ENCODE measurements at regions of chr17 and their contacts with region 1.

Region 1: DNA sequence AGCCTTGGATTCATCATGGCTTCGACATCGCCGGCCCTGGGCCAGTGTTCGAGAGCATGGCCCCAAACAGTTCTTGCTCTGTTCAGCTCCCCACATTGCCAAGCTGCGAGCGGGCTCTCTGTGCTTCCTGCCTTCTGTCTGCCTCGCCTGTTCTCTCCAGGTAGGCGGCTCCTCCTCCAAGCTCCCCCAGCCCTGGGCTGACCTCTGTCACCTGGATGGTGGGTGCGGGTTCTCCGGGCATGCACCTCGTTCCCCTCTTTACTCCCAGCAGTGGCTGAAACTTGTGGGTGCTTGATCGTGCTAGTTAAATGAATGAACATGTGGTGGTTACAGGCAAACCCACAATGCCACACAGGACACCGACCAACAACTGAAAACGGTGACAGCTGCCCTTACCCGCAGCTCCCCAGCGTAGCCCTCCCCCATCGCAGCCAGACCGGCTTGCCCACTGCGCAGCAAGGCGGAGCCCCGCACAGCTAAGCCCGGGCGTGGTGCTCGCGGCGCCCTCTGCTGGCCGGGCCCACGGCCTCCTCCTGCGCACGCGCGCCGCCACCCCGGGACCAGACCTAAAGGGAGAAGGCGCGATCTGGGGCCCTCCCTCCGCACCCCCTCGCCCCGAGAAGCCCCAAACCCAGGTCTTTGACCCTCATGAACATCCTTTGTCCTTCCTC is 23.0 kb upstream of the EIF1 start:
- DNase-seq: peak; percentile 46
- H3K4me3 ChIP-seq: peak overlapping the region; percentile 60
- H3K27ac ChIP-seq: peak overlapping the region; percentile 85
- H3K27me3 ChIP-seq: no peaks in the 10 kb centered on the region
- CTCF ChIP-seq: peak; percentile 86

Region 2: DNA sequence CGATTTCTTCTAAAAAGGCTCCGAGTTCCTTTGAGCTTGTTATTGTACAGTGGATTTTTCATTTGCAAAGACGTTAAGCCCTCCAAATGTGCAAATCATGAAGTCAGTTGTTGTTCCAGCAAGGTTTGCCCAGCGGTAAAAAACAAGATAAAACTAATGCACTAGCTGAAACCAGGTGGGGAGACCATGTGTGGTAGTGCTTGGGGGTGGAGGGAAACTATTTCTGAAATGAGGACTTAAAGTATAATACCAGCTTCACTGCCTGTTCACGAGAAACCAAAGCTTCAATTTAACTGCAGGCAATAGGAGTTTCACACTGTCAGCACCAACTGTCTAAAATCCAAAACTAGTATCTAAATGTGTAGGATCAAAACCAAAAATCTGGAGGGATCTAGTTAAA is 1040.4 kb before region 1 on chr17:
- CTCF ChIA-PET with region 1: interaction called, 12 read pairs
- POLR2A ChIA-PET with region 1: no interaction called
- DNase-seq: no peak
- H3K4me3 ChIP-seq: no peak overlapping the region
- H3K27ac ChIP-seq: no peak overlapping the region
- H3K27me3 ChIP-seq: no peaks in the 10 kb centered on the region
- CTCF ChIP-seq: no peak

Region 3: GRCh38 chr17:40818733-40819527 is 846.8 kb before region 1 on chr17:
- CTCF ChIA-PET with region 1: interaction called, 18 read pairs
- POLR2A ChIA-PET with region 1: interaction called, 3 read pairs
- DNase-seq: peak; percentile 30
- H3K4me3 ChIP-seq: peak overlapping the region; percentile 73
- H3K27ac ChIP-seq: peak overlapping the region; percentile 80
- H3K27me3 ChIP-seq: no peaks in the 10 kb centered on the region
- CTCF ChIP-seq: no peak

Region 4: DNA sequence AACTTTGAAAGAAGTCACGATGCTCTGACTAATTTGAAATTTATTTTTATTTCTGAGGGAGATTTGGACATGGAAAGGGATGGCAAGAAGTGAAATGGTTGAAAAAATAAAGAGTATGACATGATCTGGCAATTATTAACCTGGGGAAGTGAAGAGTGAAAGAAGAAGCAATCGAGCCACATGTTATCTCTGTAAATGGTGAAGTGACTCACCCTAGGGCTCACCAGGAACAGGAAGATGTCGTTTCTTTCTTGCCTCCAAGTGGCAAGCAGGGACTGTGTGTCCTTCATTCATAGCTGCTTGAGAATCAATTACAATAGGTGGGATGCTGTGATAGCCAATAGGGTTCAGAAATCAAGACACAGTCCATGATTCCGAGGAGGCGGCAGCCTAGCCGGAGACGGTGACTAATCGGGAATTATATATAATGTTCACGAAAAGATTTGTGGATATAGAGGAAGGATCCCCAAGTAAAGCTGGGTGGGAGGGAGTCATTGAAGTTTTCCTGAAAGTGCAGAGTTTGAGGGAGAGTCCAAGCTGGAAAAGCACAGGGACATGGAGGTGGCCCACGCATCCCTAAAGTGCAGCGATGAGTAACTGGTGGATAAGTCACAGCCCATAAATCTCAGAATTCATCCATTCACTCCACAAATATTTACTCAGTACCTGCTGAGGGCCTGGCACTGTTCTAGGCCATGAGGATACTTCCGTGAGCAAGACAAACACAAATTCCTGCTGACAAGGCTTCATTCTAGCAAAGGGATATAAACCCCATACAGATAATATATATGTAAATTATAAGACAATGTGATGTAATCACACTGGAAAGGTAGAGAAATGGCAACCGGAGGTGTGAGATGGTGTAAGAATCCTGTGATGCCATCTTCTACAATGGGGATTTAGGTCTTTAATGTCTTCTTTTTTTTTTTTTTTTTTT is 762.3 kb before region 1 on chr17:
- CTCF ChIA-PET with region 1: interaction called, 25 read pairs
- POLR2A ChIA-PET with region 1: no interaction called
- DNase-seq: no peak
- H3K4me3 ChIP-seq: peak overlapping the region; percentile 21; the same call in 1 of the 2 replicates
- H3K27ac ChIP-seq: peak overlapping the region; percentile 83
- H3K27me3 ChIP-seq: no peaks in the 10 kb centered on the region
- CTCF ChIP-seq: no peak

Region 5: GRCh38 chr17:41579484-41580243 is 86.0 kb before region 1 on chr17:
- CTCF ChIA-PET with region 1: interaction called, 12 read pairs
- POLR2A ChIA-PET with region 1: no interaction called
- DNase-seq: peak; percentile 6
- H3K4me3 ChIP-seq: no peak overlapping the region
- H3K27ac ChIP-seq: no peak overlapping the region
- H3K27me3 ChIP-seq: peaks cover 28% of the 10 kb centered on the region
- CTCF ChIP-seq: peak; percentile 76

Region 6: GRCh38 chr17:41627838-41628370 is 37.8 kb before region 1 on chr17:
- CTCF ChIA-PET with region 1: no interaction called
- POLR2A ChIA-PET with region 1: no interaction called
- DNase-seq: no peak
- H3K4me3 ChIP-seq: no peak overlapping the region
- H3K27ac ChIP-seq: no peak overlapping the region
- H3K27me3 ChIP-seq: peaks cover 9% of the 10 kb centered on the region
- CTCF ChIP-seq: no peak

Region 7: DNA sequence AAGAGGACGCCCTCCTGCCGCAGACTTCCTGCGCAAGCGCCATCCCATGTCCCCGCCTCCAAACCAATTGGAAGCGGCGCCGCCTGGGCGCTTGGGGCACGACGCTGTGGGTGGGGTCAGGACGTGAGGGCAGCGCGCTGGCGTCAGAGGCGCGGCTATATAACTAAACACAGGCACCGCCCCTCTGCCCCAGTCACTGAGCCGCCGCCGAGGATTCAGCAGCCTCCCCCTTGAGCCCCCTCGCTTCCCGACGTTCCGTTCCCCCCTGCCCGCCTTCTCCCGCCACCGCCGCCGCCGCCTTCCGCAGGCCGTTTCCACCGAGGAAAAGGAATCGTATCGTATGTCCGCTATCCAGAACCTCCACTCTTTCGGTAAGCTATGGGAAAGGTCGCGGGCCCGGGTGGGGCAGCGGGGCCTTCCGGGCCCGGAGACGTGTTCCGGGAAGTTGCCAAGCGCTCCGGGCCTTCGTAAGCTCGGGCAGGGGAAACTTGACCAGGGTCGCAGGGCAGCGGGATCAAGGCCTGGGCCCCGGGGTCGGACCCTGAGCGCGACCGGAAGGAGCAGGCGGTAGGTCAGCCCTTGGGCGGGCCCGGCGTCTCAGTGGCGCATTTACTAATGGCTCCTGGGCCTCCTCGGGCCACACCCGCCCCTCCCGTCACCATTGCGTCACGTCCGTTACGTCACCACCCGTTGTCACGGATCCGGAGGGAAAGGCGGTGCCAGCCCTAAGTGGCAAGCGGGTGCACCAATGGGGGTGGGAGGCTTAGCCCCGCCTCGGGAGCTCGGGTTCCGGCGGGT is 23.2 kb after region 1 on chr17 and contains the start of gene EIF1:
- CTCF ChIA-PET with region 1: interaction called, 7 read pairs
- POLR2A ChIA-PET with region 1: interaction called, 24 read pairs
- DNase-seq: peak; percentile 99
- H3K4me3 ChIP-seq: peak within 1 kb of the TSS; percentile 99
- H3K27ac ChIP-seq: peak within 1 kb of the TSS; percentile 100
- H3K27me3 ChIP-seq: peaks cover 4% of the 10 kb centered on the region
- CTCF ChIP-seq: no peak
- polyA plus RNA-seq, gene EIF1: 529 and 549 TPM in 2 replicates